AG04449 (cell line): ENCODE measurements at regions of chr7 and their contacts with region 1.

Region 1: DNA sequence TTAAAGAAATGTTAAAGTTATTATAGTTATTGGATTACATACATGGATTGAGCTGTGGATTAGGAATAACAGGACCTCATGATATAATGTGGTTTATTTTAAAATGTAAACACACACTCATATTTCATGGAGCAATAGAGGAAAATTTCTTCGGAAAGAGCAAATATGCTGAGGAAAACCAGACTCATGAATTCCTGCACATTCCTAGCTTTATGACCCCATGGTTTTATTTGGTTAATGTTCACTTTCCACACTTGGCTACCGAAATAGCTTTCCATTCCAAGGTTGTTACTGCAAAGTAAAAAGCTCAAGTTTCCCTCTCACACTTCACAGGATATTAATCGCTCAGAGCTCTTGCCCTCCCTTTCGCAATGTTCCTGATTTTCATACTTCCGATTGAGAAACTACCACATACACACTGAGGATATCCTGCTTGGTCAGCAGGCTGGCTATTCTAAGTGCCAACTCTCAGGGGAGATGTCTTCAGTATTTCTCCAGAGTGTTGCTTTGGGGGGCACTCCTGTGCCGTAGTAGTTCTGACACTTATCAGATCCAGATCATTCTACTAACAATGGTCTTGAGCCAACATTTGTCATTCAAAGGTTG is 77.5 kb upstream of the STEAP1B start:
- DNase-seq: peak; percentile 98
- H3K4me3 ChIP-seq: no peak overlapping the region
- CTCF ChIP-seq: no peak

Region 2: DNA sequence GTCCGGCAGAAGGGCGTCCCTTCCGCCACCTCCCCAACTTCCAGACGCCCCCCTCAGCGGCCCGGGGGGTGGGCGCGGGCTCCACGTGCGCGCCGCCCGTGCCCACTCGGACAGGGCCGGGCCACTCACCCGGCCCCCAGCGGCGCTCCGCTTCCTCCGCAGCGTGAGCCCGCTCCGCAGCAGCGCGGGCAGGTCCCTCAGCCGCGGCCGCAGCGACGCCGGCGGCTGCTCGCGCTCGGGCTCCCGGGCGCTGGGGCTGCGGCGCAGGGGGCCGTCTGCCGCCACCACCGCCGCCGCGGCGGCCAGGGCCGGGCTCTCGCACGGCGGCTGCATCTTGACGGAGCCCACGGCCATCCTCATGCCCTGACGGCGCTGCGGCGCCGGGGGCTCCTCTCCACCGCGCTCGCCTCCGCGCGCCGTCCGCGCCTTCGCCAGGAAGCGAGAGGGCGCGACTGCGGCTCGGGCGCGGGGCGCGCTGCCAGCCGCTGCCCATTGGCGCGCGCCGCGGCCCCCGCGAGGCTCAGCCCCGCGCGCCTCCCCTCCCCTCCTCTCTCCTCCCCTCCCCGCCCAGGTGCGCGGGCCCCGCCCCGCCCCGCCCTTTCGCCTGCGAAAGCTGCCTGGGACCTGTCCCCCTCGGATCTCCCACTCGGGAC is 220.7 kb before region 1 on chr7 and contains the start of gene RAPGEF5:
- CTCF ChIA-PET with region 1: no interaction called
- POLR2A ChIA-PET with region 1: no interaction called
- DNase-seq: no peak
- H3K4me3 ChIP-seq: peak within 1 kb of the TSS; percentile 36
- CTCF ChIP-seq: no peak

Region 3: GRCh38 chr7:22565315-22565811 is 12.1 kb before region 1 on chr7:
- CTCF ChIA-PET with region 1: interaction called, 14 read pairs
- POLR2A ChIA-PET with region 1: interaction called, 14 read pairs
- DNase-seq: no peak
- H3K4me3 ChIP-seq: no peak overlapping the region
- CTCF ChIP-seq: no peak